Activated T-helper 2 cell treated with anti-CD3 and anti-CD28 coated beads, Interferon-gamma antibody, Interleukin-2, Interleukin-4, amounts not matched to agents 10 μg/mL and 5 μg/mL and 100 μg/mL, durations not matched to agents 14 hours and 24 hours and 36 hours (primary cell): ENCODE measurements at regions of chr17 and their contacts with region 1.

Region 1: DNA sequence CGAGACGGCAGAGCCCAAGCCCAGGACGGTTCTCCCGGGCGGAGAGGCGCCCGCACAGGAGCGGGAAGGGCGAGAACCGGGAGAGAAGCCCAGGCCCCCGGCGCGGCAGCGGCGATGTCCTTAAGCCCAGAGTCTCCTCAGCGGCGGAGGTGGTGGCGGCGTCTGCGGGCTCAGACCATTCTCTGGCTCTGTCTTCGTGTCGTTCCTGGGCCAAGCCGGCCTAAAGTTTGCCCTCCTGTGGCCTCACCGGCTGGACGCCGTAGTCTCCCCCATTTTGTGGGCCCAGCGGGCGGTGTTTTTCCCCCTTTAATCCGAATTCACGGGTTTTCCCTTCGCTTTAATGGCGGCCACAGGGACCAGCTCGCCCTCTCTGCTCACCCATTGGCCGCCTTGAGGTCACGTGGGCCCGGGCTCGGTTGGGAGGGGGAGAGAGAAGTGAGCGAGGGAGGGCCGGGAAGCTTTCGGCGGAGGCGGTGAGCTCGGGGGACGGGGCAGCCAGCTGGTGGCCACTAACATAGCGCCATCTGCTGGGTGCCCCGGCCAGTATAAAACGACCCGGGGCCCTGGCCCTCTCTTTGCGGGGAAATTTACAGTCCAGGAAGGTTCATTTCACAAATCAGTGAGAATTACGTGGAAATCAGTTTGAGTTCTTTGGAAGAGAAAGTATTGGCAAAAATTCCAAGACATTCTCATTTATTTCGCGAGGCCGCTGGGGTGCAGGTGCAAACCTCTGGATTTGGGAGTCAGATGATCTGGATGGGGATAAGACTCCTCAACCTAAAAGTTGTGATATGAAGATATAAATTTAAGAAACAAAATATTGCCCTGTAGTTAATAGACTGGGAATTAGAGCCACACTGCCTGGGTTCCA is 755 bp upstream of the MED13 start:
- DNase-seq: peak; percentile 96
- H3K4me3 Mint-ChIP-seq: peak overlapping the region; percentile 95
- H3K27ac Mint-ChIP-seq: peak overlapping the region; percentile 99
- H3K4me1 Mint-ChIP-seq: peaks cover 32% of the 10 kb centered on the region
- H3K27me3 Mint-ChIP-seq: peaks cover 2% of the 10 kb centered on the region

Region 2: GRCh38 chr17:61412143-61412859 is 653.5 kb before region 1 on chr17:
- intact Hi-C with region 1: loop called (anchors 10 kb)
- DNase-seq: peak; percentile 71
- H3K4me3 Mint-ChIP-seq: peak overlapping the region; percentile 42
- H3K27ac Mint-ChIP-seq: no peak overlapping the region
- H3K4me1 Mint-ChIP-seq: peaks cover 8% of the 10 kb centered on the region
- H3K27me3 Mint-ChIP-seq: peaks cover 55% of the 10 kb centered on the region

Region 3: DNA sequence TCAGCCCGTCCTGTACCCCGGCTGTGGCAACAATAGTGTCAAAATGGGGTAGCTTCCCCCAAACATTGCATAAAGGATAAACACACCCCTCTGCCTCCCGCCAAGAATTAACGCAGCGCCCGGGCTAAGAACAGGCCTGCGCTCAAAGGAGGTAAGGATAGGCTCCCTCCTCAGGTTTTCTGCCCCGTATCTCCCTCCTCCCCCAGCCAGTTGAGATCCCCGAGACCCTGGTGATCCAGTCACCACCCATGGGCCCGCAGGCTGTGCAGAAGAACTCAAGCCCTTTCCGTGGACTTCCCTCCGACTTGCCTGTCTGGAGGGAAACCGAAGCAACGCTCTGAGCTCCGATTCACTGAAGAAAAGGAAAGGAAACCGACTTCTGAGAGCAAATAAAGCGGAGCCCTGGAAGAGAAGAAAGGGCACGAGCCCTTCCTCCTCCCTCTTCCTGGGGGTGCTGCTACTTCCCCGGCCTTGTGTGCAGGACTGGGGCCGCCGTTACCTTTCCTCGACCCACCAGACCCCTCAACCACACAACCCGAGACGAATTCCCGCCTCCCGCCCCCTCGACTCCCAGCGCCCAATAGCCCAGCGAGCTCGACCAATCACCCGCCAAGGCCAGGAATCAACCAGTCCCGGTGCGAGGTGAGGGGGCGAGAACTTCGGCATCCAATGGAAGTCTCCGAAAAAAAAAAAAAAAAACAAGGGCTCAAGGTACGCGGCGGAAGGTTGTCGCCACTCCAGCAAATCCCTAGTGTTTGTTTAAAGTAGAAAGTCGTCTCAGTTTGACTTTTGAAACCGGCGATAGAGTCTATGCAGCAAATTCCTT is 202.6 kb before region 1 on chr17 and contains the start of gene BRIP1:
- intact Hi-C with region 1: loop called (anchors 5 kb)
- DNase-seq: peak; percentile 87
- H3K4me3 Mint-ChIP-seq: peak within 1 kb of the TSS; percentile 93
- H3K27ac Mint-ChIP-seq: peak within 1 kb of the TSS; percentile 94
- H3K4me1 Mint-ChIP-seq: peaks cover 36% of the 10 kb centered on the region
- H3K27me3 Mint-ChIP-seq: no peaks in the 10 kb centered on the region
- total RNA-seq, gene BRIP1: 16.4 and 16.9 TPM in 2 replicates

Region 4: DNA sequence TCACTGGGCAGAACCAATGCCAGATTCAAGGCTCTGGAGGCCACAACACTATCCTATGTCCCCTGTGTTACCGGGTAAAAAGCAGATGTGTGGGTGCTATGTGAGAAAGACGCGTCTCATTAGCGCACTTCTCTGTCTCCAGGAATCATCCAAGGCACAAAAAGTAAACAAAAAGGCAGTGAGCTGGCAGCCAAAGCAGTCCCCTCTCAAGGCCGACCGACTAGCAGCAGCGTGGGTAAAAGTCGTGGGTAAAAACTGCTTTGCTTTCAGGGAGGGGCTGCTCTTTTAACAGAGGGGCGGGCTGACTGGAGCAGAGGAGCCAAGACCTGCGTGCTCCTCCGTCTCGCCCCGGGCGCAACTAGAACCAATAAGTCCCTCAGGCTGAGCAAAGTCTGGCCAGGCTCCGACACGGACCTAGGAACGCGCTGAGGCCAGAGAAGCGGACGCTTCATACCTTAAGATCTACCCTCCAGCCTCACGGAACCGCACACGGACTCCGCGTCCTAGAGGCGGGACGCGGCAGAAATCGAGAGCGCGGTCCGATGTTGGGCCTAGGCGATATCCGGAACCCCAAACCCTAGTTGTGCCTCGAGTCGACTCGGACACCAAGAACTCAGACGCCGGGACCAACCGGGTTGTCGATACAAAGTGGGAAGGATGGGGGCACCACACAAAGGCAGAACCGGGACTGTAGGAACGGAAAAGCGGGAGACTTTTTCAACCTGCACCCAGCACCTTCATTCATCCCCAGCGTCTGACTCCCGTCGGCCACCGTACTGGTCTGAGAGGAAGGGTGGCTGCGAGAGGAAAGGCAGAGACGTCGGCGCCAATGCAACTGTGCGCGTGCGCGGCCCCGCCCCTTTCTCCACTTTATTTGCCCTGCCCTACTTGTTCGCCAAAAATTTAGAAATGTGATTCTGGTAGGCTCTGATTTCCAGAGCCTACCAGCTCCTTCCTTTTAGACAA is 138.3 kb before region 1 on chr17 and contains the start of gene INTS2:
- intact Hi-C with region 1: loop called (anchors 2 kb)
- DNase-seq: peak; percentile 92
- H3K4me3 Mint-ChIP-seq: peak within 1 kb of the TSS; percentile 94
- H3K27ac Mint-ChIP-seq: peak within 1 kb of the TSS; percentile 94
- H3K4me1 Mint-ChIP-seq: peaks cover 18% of the 10 kb centered on the region
- H3K27me3 Mint-ChIP-seq: no peaks in the 10 kb centered on the region
- total RNA-seq, gene INTS2: 28.4 and 29.2 TPM in 2 replicates

Region 5: DNA sequence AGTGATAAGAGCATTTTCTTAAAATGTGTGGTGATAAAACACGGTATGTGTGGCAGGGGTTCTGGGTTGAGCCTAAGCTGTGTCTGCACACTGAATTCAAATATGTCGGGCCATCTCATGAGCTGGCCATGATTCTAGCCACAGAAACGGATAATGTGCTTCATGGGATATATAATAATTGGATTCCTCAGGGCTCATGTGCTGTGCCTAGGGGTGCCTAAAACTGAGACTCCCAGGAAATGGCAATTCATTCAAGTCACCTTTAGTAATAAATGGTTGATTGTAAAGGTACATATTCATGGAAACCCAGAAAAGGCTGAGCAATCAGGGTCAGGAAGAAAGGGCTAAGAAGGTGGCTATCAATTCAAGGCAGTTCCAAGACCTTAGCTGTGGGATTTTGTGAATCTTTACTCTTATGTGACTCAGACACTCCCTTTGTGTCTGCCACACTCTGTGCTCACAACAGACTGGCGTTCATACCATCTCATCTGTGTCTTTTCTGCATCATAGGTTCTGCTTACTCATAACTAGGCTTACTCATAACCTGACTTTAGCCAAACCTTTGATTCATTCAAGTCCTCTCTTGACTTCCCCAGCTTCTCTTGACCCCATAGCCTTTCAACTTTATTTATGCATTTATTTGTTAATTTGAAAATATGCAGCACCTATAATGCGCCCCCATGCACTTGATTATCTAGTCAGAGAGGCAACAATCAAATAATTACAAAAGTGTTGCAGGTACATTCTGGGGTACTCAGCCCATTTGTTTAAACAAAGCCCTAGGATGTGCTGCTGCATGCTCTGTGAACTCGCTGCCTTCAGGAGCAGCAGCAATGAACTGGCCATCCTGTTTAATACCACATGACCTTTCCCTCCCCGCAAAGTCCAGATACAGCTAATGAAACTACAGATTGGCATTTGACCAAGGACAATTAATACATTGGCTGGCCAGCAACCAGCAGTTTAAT is 27.6 kb after region 1 on chr17:
- intact Hi-C with region 1: loop called (anchors 1 kb)
- DNase-seq: no peak
- H3K4me3 Mint-ChIP-seq: no peak overlapping the region
- H3K27ac Mint-ChIP-seq: peak overlapping the region; percentile 43
- H3K4me1 Mint-ChIP-seq: peaks cover 21% of the 10 kb centered on the region
- H3K27me3 Mint-ChIP-seq: no peaks in the 10 kb centered on the region

Region 6: DNA sequence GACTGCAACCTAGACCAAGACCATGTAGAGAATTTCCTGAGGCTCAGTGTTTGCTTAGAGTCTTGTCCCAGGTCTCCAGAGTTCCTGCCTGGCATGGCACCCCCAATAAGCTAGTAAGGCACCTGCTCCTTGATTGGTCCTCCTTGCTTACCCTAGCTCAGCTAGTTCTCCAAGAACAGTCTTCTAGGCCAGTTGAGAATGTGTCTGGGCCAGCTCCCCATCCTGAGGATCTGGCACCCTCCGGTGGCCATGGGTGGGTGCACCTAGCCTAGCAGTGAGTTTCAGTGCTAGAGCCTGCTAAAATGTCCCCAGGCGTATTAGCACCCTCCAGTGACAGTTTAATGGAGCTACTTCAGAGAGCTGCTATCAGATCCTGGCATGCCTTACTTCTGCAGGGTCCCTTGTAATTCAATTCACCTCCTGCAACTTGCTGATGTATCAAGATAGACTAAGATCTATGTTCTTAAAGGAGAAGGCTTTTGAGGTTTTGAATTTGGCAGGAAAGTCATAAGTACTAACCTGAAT is 43.6 kb after region 1 on chr17:
- intact Hi-C with region 1: loop called (anchors 1 kb)
- DNase-seq: peak; percentile 66
- H3K4me3 Mint-ChIP-seq: no peak overlapping the region
- H3K27ac Mint-ChIP-seq: no peak overlapping the region
- H3K4me1 Mint-ChIP-seq: peaks cover 5% of the 10 kb centered on the region
- H3K27me3 Mint-ChIP-seq: no peaks in the 10 kb centered on the region

Region 7: GRCh38 chr17:62336540-62336939 is 270.7 kb after region 1 on chr17:
- intact Hi-C with region 1: no loop called
- DNase-seq: no peak
- H3K4me3 Mint-ChIP-seq: no peak overlapping the region
- H3K27ac Mint-ChIP-seq: no peak overlapping the region
- H3K4me1 Mint-ChIP-seq: no peaks in the 10 kb centered on the region
- H3K27me3 Mint-ChIP-seq: no peaks in the 10 kb centered on the region

Region 8: GRCh38 chr17:62968445-62968923 is 902.7 kb after region 1 on chr17:
- intact Hi-C with region 1: loop called (anchors 5 kb)
- DNase-seq: peak; percentile 44
- H3K4me3 Mint-ChIP-seq: peak overlapping the region; percentile 23
- H3K27ac Mint-ChIP-seq: no peak overlapping the region
- H3K4me1 Mint-ChIP-seq: peaks cover 31% of the 10 kb centered on the region
- H3K27me3 Mint-ChIP-seq: peaks cover 57% of the 10 kb centered on the region